Upper lobe of right lung (tissue), 1 donor: ENCODE measurements at regions of chr14 and their contacts with region 1.

Region 1: GRCh38 chr14:23057757-23058653 is 685 bp upstream of the CDH24 start:
- DNase-seq: peak; percentile 93
- ATAC-seq: peak; percentile 86
- H3K4me3 ChIP-seq: peak overlapping the region; percentile 69
- H3K27ac ChIP-seq: peak overlapping the region; percentile 51
- H3K4me1 ChIP-seq: peaks cover 18% of the 10 kb centered on the region
- H3K27me3 ChIP-seq: no peaks in the 10 kb centered on the region
- CTCF ChIP-seq: peak; percentile 94

Region 2: GRCh38 chr14:22505697-22506377 is 552.2 kb before region 1 on chr14:
- intact Hi-C with region 1: no loop called
- DNase-seq: no peak
- ATAC-seq: no peak
- H3K4me3 ChIP-seq: no peak overlapping the region
- H3K27ac ChIP-seq: no peak overlapping the region
- H3K4me1 ChIP-seq: no peaks in the 10 kb centered on the region
- H3K27me3 ChIP-seq: no peaks in the 10 kb centered on the region
- CTCF ChIP-seq: no peak

Region 3: DNA sequence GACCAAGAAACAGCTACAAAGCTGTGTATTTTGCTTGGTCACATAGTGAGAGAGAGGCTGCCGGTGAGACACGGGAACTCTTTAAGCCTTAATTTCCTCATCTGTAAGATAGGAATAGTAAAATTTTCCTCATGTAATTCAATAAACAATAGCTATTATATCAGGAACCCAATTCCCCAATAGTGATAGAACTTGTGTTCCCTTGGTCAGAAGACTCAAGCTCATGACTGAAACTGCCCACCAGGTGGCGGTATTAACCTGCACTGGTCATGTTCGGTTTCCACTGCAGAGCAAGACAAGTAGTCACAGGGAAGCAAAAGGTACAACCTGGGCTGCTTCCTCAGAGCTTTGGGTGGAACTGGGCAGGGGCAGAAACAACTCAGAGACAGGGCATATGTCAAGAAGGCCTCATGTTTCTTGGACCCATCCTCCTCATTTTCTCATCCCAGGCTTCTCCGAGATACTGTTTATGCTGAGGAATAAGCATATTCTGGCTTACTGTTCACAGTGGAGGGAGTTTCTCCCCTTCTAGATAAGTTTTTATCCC is 71.4 kb before region 1 on chr14:
- intact Hi-C with region 1: loop called (anchors 5 kb)
- DNase-seq: peak; percentile 83
- ATAC-seq: peak; percentile 78
- H3K4me3 ChIP-seq: no peak overlapping the region
- H3K27ac ChIP-seq: no peak overlapping the region
- H3K4me1 ChIP-seq: peaks cover 6% of the 10 kb centered on the region
- H3K27me3 ChIP-seq: peaks cover 6% of the 10 kb centered on the region
- CTCF ChIP-seq: peak; percentile 93